ENCODE measurements at regions of chr2 and their contacts with region 1.

Region 1: DNA sequence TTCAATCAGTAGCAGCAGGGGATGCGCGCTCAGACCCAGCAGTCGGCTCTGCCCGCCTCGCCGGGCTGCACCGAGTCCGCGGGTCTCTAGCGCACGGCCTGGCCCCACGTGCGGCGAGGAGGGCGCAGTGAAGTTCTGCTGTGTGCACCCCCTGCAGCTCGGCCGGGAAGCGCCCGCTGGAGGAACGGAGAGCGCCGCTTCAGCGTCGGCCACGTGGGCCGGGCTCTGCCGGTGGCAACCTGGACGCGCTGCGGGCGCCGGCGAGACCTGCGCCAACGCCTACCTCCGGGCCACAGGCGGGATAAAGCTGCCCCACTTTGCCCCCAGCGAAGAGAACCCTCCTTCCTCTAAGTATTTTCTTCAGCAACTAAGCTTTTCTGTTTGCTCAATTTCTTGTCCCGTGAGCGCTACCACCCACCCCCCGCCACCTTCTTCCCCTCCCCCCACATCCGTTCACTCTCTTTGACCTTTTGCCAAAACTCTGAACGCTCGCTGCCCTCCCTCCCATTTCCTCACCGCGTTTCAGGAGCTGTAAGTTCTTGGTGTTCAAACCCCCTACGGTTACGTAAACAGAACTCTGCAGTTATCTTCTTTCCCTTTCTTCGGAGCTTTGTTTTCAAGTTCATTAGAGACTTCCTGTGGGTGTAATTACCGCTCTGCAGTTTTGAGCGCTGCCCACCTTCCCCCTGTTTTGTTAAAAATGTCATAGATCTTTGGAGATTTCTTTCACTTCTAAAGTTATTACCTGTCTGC is 42.6 kb upstream of the EDAR start:
- DNase-seq: peak; percentile 48 to 94 (median 77)
- ATAC-seq: peak; percentile 74
- H3K4me3 ChIP-seq: peak overlapping the region; percentile 49 to 60
- H3K4me3 Mint-ChIP-seq: peak overlapping the region; percentile 76
- H3K27ac ChIP-seq: peak overlapping the region; percentile 76 to 82
- H3K27ac Mint-ChIP-seq: peak overlapping the region; percentile 90
- H3K4me1 ChIP-seq: peaks cover 75% of the 10 kb centered on the region
- H3K4me1 Mint-ChIP-seq: peaks cover 68% of the 10 kb centered on the region
- H3K27me3 ChIP-seq: no peaks in the 10 kb centered on the region
- H3K27me3 Mint-ChIP-seq: no peaks in the 10 kb centered on the region
- CTCF ChIP-seq: no peak

Region 2: GRCh38 chr2:108786354-108787199 is 245.1 kb before region 1 on chr2 and contains the start of gene CCDC138:
- CTCF ChIA-PET with region 1: no interaction called
- POLR2A ChIA-PET with region 1: no interaction called
- intact Hi-C with region 1: loop called in 1 of 2 experiments (anchors 5 kb)
- DNase-seq: peak; percentile 85 to 95 (median 93)
- ATAC-seq: peak; percentile 97
- H3K4me3 ChIP-seq: peak within 1 kb of the TSS; percentile 76 to 90
- H3K4me3 Mint-ChIP-seq: peak within 1 kb of the TSS; percentile 99
- H3K27ac ChIP-seq: peak within 1 kb of the TSS; percentile 77 to 83
- H3K27ac Mint-ChIP-seq: peak within 1 kb of the TSS; percentile 97
- H3K4me1 ChIP-seq: peaks cover 10% of the 10 kb centered on the region
- H3K4me1 Mint-ChIP-seq: peaks cover 22% of the 10 kb centered on the region
- H3K27me3 ChIP-seq: no peaks in the 10 kb centered on the region
- H3K27me3 Mint-ChIP-seq: no peaks in the 10 kb centered on the region
- CTCF ChIP-seq: no peak
- total RNA-seq, gene CCDC138: 4.6 to 5.9 TPM

Region 3: DNA sequence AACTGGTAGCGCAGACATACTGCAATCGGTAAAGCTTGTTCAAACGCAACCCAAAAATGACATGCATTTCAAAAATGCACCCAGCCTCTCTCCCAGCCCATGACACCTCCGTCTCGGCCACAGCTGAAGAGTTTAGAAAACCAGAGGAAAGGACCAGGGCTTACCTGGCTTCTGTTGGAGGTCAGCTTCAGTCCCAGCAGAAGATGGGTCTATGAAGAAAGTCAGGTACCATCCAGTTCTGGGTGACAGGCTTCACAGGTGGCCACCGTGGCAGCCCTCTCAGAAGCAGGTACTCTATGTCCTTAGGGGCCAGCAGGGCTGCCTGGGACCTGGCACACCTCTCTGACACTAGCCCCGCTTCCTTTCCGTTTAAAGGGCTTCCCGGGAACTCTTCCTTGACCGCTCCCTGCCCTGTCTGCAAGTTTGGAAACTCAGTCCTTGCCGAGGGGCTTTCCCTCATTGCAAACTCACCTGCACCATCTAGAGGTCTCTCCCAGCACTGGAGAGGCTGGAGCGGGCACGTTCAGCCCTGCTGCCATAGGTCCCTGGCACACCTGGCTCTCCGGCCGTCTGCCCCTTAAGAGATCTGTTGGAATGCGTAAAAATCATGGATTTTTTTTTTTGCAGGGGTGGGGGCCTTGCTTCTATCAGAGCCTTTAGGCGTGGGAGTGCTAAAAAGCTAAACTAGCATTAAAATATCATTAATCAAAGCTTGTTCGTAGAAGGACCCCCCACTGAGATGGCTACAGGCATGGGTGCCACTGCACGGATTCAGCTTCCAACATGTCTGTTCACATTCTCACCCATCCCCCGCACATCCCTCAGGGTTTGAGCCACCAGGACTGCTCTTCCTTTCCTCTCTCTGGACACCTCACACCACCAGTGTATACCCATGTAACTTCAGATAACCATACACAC is 42.6 kb before region 1 on chr2 and contains the start of gene EDAR:
- CTCF ChIA-PET with region 1: interaction called, 10 read pairs
- POLR2A ChIA-PET with region 1: interaction called, 11 read pairs
- intact Hi-C with region 1: loop called in 1 of 2 experiments (anchors 1 kb)
- DNase-seq: peak in 8 of 9 experiments; percentile 11 to 75 (median 54)
- ATAC-seq: peak; percentile 64
- H3K4me3 ChIP-seq: peak within 1 kb of the TSS; percentile 30 to 35
- H3K4me3 Mint-ChIP-seq: peak within 1 kb of the TSS; percentile 85
- H3K27ac ChIP-seq: no peak within 1 kb of the TSS
- H3K27ac Mint-ChIP-seq: peak within 1 kb of the TSS; percentile 88
- H3K4me1 ChIP-seq: peaks cover 32% of the 10 kb centered on the region
- H3K4me1 Mint-ChIP-seq: peaks cover 70% of the 10 kb centered on the region
- H3K27me3 ChIP-seq: no peaks in the 10 kb centered on the region
- H3K27me3 Mint-ChIP-seq: no peaks in the 10 kb centered on the region
- CTCF ChIP-seq: peak; percentile 51
- total RNA-seq, gene EDAR: 1.6 to 2.0 TPM

Region 4: GRCh38 chr2:109046925-109047508 is 15.4 kb after region 1 on chr2:
- CTCF ChIA-PET with region 1: interaction called, 5 read pairs
- POLR2A ChIA-PET with region 1: interaction called, 39 read pairs
- intact Hi-C with region 1: loop called in 1 of 2 experiments (anchors 1 kb)
- DNase-seq: no peak
- ATAC-seq: no peak
- H3K4me3 ChIP-seq: no peak overlapping the region
- H3K4me3 Mint-ChIP-seq: peak overlapping the region; percentile 38
- H3K27ac ChIP-seq: no peak overlapping the region
- H3K27ac Mint-ChIP-seq: no peak overlapping the region
- H3K4me1 ChIP-seq: peaks cover 16% of the 10 kb centered on the region
- H3K4me1 Mint-ChIP-seq: peaks cover 36% of the 10 kb centered on the region
- H3K27me3 ChIP-seq: no peaks in the 10 kb centered on the region
- H3K27me3 Mint-ChIP-seq: no peaks in the 10 kb centered on the region
- CTCF ChIP-seq: no peak

Region 5: GRCh38 chr2:109102588-109103233 is 71.1 kb after region 1 on chr2:
- CTCF ChIA-PET with region 1: interaction called, 3 read pairs
- POLR2A ChIA-PET with region 1: interaction called, 14 read pairs
- intact Hi-C with region 1: no loop called
- DNase-seq: peak in 5 of 9 experiments; percentile 20 to 50 (median 28)
- ATAC-seq: peak; percentile 48
- H3K4me3 ChIP-seq: no peak overlapping the region
- H3K4me3 Mint-ChIP-seq: peak overlapping the region; percentile 57
- H3K27ac ChIP-seq: no peak overlapping the region
- H3K27ac Mint-ChIP-seq: peak overlapping the region; percentile 69
- H3K4me1 ChIP-seq: peaks cover 12% of the 10 kb centered on the region
- H3K4me1 Mint-ChIP-seq: peaks cover 28% of the 10 kb centered on the region
- H3K27me3 ChIP-seq: no peaks in the 10 kb centered on the region
- H3K27me3 Mint-ChIP-seq: no peaks in the 10 kb centered on the region
- CTCF ChIP-seq: no peak

Region 6: GRCh38 chr2:109348671-109349550 is 317.3 kb after region 1 on chr2:
- CTCF ChIA-PET with region 1: no interaction called
- POLR2A ChIA-PET with region 1: interaction called, 14 read pairs
- intact Hi-C with region 1: loop called in 1 of 2 experiments (anchors 5 kb)
- DNase-seq: peak; percentile 30 to 80 (median 59)
- ATAC-seq: peak; percentile 98
- H3K4me3 ChIP-seq: peak overlapping the region in 1 of 2 experiments; percentile 21
- H3K4me3 Mint-ChIP-seq: peak overlapping the region; percentile 71
- H3K27ac ChIP-seq: peak overlapping the region; percentile 49 to 74
- H3K27ac Mint-ChIP-seq: peak overlapping the region; percentile 95
- H3K4me1 ChIP-seq: peaks cover 48% of the 10 kb centered on the region
- H3K4me1 Mint-ChIP-seq: peaks cover 66% of the 10 kb centered on the region
- H3K27me3 ChIP-seq: no peaks in the 10 kb centered on the region
- H3K27me3 Mint-ChIP-seq: no peaks in the 10 kb centered on the region
- CTCF ChIP-seq: no peak

Measured in CD8-positive, alpha-beta T cell (primary cell).